T-cell (primary cell): ENCODE measurements at regions of chr1 and their contacts with region 1.

Region 1: GRCh38 chr1:115098979-115099692 is 9.8 kb upstream of the TSPAN2 start:
- DNase-seq: peak; percentile 19 to 93 (median 80)
- ATAC-seq: peak; percentile 84 to 93 (median 86)
- H3K4me3 ChIP-seq: peak overlapping the region; percentile 57 to 64
- H3K4me3 Mint-ChIP-seq: peak overlapping the region; percentile 83 to 95 (median 91)
- H3K27ac ChIP-seq: peak overlapping the region; percentile 99
- H3K27ac Mint-ChIP-seq: peak overlapping the region; percentile 99 to 100
- H3K4me1 ChIP-seq: peaks cover 18 to 22% of the 10 kb centered on the region in 2 experiments
- H3K4me1 Mint-ChIP-seq: peaks cover 50 to 63% (median 54%) of the 10 kb centered on the region in 3 donors
- H3K27me3 ChIP-seq: no peaks in the 10 kb centered on the region
- H3K27me3 Mint-ChIP-seq: no peaks in the 10 kb centered on the region

Region 2: DNA sequence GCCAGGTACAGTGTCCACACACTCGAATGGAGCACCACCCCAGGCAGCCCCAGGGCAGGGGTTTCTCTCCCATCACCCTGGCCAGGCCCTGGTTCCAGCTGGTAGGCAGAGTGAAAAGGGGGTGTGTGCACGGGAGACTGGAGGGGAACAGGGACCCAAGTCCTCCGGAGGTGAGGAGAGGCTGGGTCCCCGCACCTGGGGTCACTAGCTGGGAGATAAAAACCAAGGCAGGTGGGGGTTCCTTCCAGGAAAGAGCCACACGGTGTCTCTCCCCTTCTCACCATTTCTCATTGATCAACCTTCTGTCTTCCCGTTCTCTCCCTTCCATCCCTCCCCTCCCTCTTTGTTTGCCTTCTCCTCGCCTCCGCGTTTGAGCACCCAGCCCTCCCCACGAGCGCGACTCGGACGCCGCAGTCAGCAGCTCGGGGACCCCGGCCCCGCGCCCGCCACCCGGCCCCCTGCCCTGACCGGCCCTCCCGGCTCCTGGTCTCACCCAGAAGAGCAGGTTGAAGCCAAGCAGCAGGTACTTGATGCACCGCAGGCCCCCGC is 10.2 kb before region 1 on chr1:
- CTCF ChIA-PET with region 1: interaction called, 3 to 5 read pairs
- POLR2A ChIA-PET with region 1: interaction called, 4 to 10 read pairs
- DNase-seq: peak in 2 of 35 experiments; percentile 9 to 10
- ATAC-seq: peak in 3 of 4 experiments; percentile 5 to 10 (median 5)
- H3K4me3 ChIP-seq: peak overlapping the region; percentile 26 to 69
- H3K4me3 Mint-ChIP-seq: peak overlapping the region; percentile 73 to 81 (median 81)
- H3K27ac ChIP-seq: peak overlapping the region; percentile 22
- H3K27ac Mint-ChIP-seq: peak overlapping the region in 1 of 2 donors; percentile 34
- H3K4me1 ChIP-seq: peaks cover 10 to 43% of the 10 kb centered on the region in 2 experiments
- H3K4me1 Mint-ChIP-seq: peaks cover 40 to 56% (median 45%) of the 10 kb centered on the region in 3 donors
- H3K27me3 ChIP-seq: peaks cover 0 to 2% of the 10 kb centered on the region in 2 experiments
- H3K27me3 Mint-ChIP-seq: peaks cover 0 to 4% of the 10 kb centered on the region in 2 donors

Region 3: GRCh38 chr1:115138968-115139367 is 39.8 kb after region 1 on chr1:
- CTCF ChIA-PET with region 1: no interaction called
- POLR2A ChIA-PET with region 1: no interaction called
- DNase-seq: peak; percentile 2 to 77 (median 46)
- ATAC-seq: peak; percentile 81 to 88 (median 86)
- H3K4me3 ChIP-seq: peak overlapping the region in 1 of 2 donors; percentile 46
- H3K4me3 Mint-ChIP-seq: peak overlapping the region; percentile 9 to 55 (median 29)
- H3K27ac ChIP-seq: no peak overlapping the region
- H3K27ac Mint-ChIP-seq: no peak overlapping the region
- H3K4me1 ChIP-seq: peaks cover 0 to 2% of the 10 kb centered on the region in 2 experiments
- H3K4me1 Mint-ChIP-seq: peaks cover 0 to 5% (median 4%) of the 10 kb centered on the region in 3 donors
- H3K27me3 ChIP-seq: peaks cover 0 to 17% of the 10 kb centered on the region in 2 experiments
- H3K27me3 Mint-ChIP-seq: peaks cover 22 to 37% of the 10 kb centered on the region in 2 donors